H1 (cell line): ENCODE measurements at regions of chr1 and their contacts with region 1.

Region 1: GRCh38 chr1:151346769-151347522 is at the start of gene RFX5:
- DNase-seq: peak; percentile 89 to 98
- H3K4me3 ChIP-seq: peak within 1 kb of the TSS; percentile 61 to 76 (median 66)
- H3K27ac ChIP-seq: peak within 1 kb of the TSS; percentile 99
- H3K4me1 ChIP-seq: peaks cover 4 to 14% (median 12%) of the 10 kb centered on the region in 4 experiments; a peak in 5 of 7 replicates
- H3K27me3 ChIP-seq: no peaks in the 10 kb centered on the region
- CTCF ChIP-seq: no peak
- EP300 ChIP-seq: peak; percentile 74 to 97
- POLR2A ChIP-seq: peak; percentile 70 to 82
- RAD21 ChIP-seq: peak in 1 of 2 experiments; percentile 0; a peak in 1 of 4 replicates
- total RNA-seq, gene RFX5: 57.6 and 59.7 TPM in 2 replicates

Region 2: GRCh38 chr1:151372061-151372934 is 25.4 kb after region 1 on chr1 and contains the start of gene SELENBP1:
- CTCF ChIA-PET with region 1: interaction called, 6 read pairs
- POLR2A ChIA-PET with region 1: interaction called, 10 read pairs
- DNase-seq: peak; percentile 19 to 76
- H3K4me3 ChIP-seq: peak within 1 kb of the TSS; percentile 11 to 55 (median 31); a peak in 7 of 8 replicates
- H3K27ac ChIP-seq: no peak within 1 kb of the TSS
- H3K4me1 ChIP-seq: peaks cover 0 to 11% (median 8%) of the 10 kb centered on the region in 4 experiments; a peak in 6 of 7 replicates
- H3K27me3 ChIP-seq: no peaks in the 10 kb centered on the region
- CTCF ChIP-seq: no peak
- EP300 ChIP-seq: no peak
- POLR2A ChIP-seq: peak in 1 of 2 experiments; percentile 73; a peak in 2 of 3 replicates
- RAD21 ChIP-seq: no peak
- total RNA-seq, gene SELENBP1: 15.3 and 20.0 TPM in 2 replicates